ENCODE measurements at regions of chr9 and their contacts with region 1.

Region 1: DNA sequence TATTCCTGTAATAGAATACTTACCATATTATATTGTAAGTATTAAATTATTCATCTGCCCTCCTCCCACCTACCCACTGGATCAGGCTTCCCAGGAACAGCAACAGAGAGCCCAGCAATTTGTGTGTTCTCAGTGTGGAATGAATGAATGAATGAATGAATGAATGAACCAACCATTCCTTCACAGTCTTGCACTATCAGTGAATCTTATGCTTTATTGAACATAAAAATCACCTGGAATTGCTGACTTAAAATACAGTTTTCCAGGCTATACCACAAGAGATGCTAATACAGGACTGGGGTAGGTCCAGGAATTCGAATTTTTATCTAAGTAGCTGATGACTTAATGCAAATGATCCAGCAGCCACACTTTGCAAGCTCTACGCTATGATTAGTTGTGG is 51.6 kb downstream of the DOCK8 start:
- DNase-seq: no peak
- H3K4me3 ChIP-seq: no peak overlapping the region
- H3K27ac ChIP-seq: no peak overlapping the region
- H3K4me1 ChIP-seq: peaks cover 2 to 17% (median 7%) of the 10 kb centered on the region in 4 experiments
- H3K27me3 ChIP-seq: no peaks in the 10 kb centered on the region

Region 2: DNA sequence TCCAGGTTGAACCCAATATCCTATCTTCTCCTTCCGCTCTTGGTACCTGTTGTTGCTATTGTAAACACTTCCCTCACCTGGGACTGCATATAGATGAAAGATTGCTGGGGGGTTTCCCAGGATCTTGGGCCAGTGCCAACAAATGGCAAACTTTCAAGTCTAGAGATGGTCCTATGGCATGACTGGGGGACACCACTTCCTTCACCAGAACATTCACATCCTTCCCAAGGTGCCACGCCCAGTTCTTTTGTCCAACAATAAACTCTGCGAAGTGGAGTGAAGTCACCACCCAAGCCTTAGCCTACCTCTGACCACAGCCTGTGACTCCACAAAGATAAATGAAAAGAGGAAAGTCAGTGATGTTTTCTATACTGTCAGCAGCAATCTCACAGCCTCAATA is 17.2 kb before region 1 on chr9:
- CTCF ChIA-PET with region 1: no interaction called
- POLR2A ChIA-PET with region 1: no interaction called
- DNase-seq: peak in 2 of 3 donors; percentile 36 to 65
- H3K4me3 ChIP-seq: no peak overlapping the region
- H3K27ac ChIP-seq: no peak overlapping the region
- H3K4me1 ChIP-seq: peaks cover 0 to 7% (median 0%) of the 10 kb centered on the region in 4 experiments
- H3K27me3 ChIP-seq: no peaks in the 10 kb centered on the region

Region 3: DNA sequence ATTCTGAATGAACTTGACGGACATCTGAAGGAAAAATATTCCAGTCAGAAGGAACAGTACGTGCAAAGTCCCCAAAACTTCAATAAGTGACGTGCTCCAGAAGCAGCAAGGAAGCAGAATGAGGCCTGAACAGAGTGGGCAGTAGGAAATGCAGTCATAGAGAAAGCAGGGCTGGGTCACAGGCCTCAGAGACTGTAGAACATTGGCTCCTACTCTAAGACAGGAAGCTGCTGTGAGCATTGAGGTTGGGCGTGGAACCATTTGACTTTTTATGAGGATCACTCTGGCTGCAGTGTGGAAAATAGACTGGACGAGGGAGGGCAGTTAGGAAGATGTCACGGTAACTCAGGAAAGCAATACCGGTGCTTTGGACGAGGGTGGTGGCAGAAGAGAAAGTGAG is 12.4 kb after region 1 on chr9:
- CTCF ChIA-PET with region 1: interaction called, 10 read pairs
- POLR2A ChIA-PET with region 1: no interaction called
- DNase-seq: no peak
- H3K4me3 ChIP-seq: peak overlapping the region in 1 of 7 experiments; percentile 5
- H3K27ac ChIP-seq: peak overlapping the region; percentile 96 to 98
- H3K4me1 ChIP-seq: peaks cover 16 to 69% (median 43%) of the 10 kb centered on the region in 4 experiments
- H3K27me3 ChIP-seq: no peaks in the 10 kb centered on the region

Region 4: GRCh38 chr9:316382-316965 is 50.2 kb after region 1 on chr9:
- CTCF ChIA-PET with region 1: no interaction called
- POLR2A ChIA-PET with region 1: no interaction called
- DNase-seq: peak; percentile 15 to 55 (median 28)
- H3K4me3 ChIP-seq: peak overlapping the region in 1 of 7 experiments; percentile 6
- H3K27ac ChIP-seq: no peak overlapping the region
- H3K4me1 ChIP-seq: peaks cover 0 to 1% (median 0%) of the 10 kb centered on the region in 4 experiments
- H3K27me3 ChIP-seq: no peaks in the 10 kb centered on the region

Region 5: GRCh38 chr9:414595-414994 is 148.4 kb after region 1 on chr9:
- CTCF ChIA-PET with region 1: no interaction called
- POLR2A ChIA-PET with region 1: no interaction called
- DNase-seq: no peak
- H3K4me3 ChIP-seq: no peak overlapping the region
- H3K27ac ChIP-seq: no peak overlapping the region
- H3K4me1 ChIP-seq: no peaks in the 10 kb centered on the region
- H3K27me3 ChIP-seq: no peaks in the 10 kb centered on the region

Region 6: GRCh38 chr9:503881-504852 is 237.9 kb after region 1 on chr9:
- CTCF ChIA-PET with region 1: no interaction called
- POLR2A ChIA-PET with region 1: no interaction called
- DNase-seq: peak; percentile 67 to 81 (median 76)
- H3K4me3 ChIP-seq: peak within 1 kb of the TSS; percentile 32 to 77 (median 58)
- H3K27ac ChIP-seq: no peak within 1 kb of the TSS
- H3K4me1 ChIP-seq: peaks cover 0 to 22% (median 17%) of the 10 kb centered on the region in 4 experiments
- H3K27me3 ChIP-seq: peaks cover 0 to 47% (median 26%) of the 10 kb centered on the region in 5 experiments

Measured in common myeloid progenitor, CD34-positive (primary cell).